HAP-1 (cell line): ENCODE measurements at regions of chr15 and their contacts with region 1.

Region 1: GRCh38 chr15:39580117-39580484 is 778 bp upstream of the THBS1 start:
- DNase-seq: peak; percentile 70 to 94
- H3K4me3 ChIP-seq: peak overlapping the region; percentile 46
- H3K4me1 ChIP-seq: peaks cover 4% of the 10 kb centered on the region; the same call in 1 of the 2 replicates
- H3K27me3 ChIP-seq: peaks cover 3% of the 10 kb centered on the region

Region 2: GRCh38 chr15:39171944-39172368 is 408.1 kb before region 1 on chr15:
- in situ Hi-C with region 1: loop called (anchors 25 kb)
- DNase-seq: peak; percentile 63 to 77
- H3K4me3 ChIP-seq: no peak overlapping the region
- H3K4me1 ChIP-seq: peaks cover 12% of the 10 kb centered on the region
- H3K27me3 ChIP-seq: peaks cover 5% of the 10 kb centered on the region; the same call in 1 of the 2 replicates

Region 3: GRCh38 chr15:39692356-39693327 is 112.5 kb after region 1 on chr15:
- in situ Hi-C with region 1: no loop called
- DNase-seq: peak; percentile 91 to 98
- H3K4me3 ChIP-seq: no peak overlapping the region
- H3K4me1 ChIP-seq: peaks cover 30% of the 10 kb centered on the region
- H3K27me3 ChIP-seq: no peaks in the 10 kb centered on the region